ENCODE measurements at regions of chr19 and their contacts with region 1.

Region 1: GRCh38 chr19:34733826-34734600 is at the start of gene ZNF181:
- DNase-seq: peak; percentile 93
- total RNA-seq, gene ZNF181: 19.3 TPM

Region 2: GRCh38 chr19:34677386-34678084 is 56.5 kb before region 1 on chr19 and contains the start of gene ZNF302:
- intact Hi-C with region 1: loop called (anchors 1 kb)
- DNase-seq: peak; percentile 97
- total RNA-seq, gene ZNF302: 32.6 TPM

Region 3: GRCh38 chr19:34692549-34692948 is 41.5 kb before region 1 on chr19:
- intact Hi-C with region 1: no loop called
- DNase-seq: no peak

Region 4: GRCh38 chr19:34926685-34927375 is 192.8 kb after region 1 on chr19 and contains the start of gene ZNF30:
- intact Hi-C with region 1: loop called (anchors 2 kb)
- DNase-seq: peak; percentile 93
- total RNA-seq, gene ZNF30: 2.4 TPM